Endothelial cell of umbilical vein (primary cell): ENCODE measurements at regions of chr17 and their contacts with region 1.

Region 1: GRCh38 chr17:70552230-70552981 is 383.1 kb downstream of the KCNJ2 start:
- DNase-seq: peak; percentile 75
- H3K4me3 ChIP-seq: no peak overlapping the region
- H3K27ac ChIP-seq: no peak overlapping the region
- H3K4me1 ChIP-seq: no peaks in the 10 kb centered on the region
- H3K27me3 ChIP-seq: no peaks in the 10 kb centered on the region
- CTCF ChIP-seq: peak; percentile 12 to 24
- POLR2A ChIP-seq: no peak

Region 2: GRCh38 chr17:69414408-69415274 is 1137.8 kb before region 1 on chr17 and contains the start of gene MAP2K6:
- CTCF ChIA-PET with region 1: no interaction called
- POLR2A ChIA-PET with region 1: no interaction called
- dilution Hi-C with region 1: no loop called
- intact Hi-C with region 1: loop called (anchors 10 kb)
- DNase-seq: peak; percentile 86
- H3K4me3 ChIP-seq: peak within 1 kb of the TSS; percentile 42 to 70 (median 48)
- H3K27ac ChIP-seq: peak within 1 kb of the TSS; percentile 35
- H3K4me1 ChIP-seq: peaks cover 48% of the 10 kb centered on the region
- H3K27me3 ChIP-seq: no peaks in the 10 kb centered on the region
- CTCF ChIP-seq: no peak
- POLR2A ChIP-seq: peak; percentile 50
- total RNA-seq, gene MAP2K6: 11.4 and 13.9 TPM in 2 replicates

Region 3: GRCh38 chr17:69539781-69540319 is 1012.6 kb before region 1 on chr17:
- CTCF ChIA-PET with region 1: interaction called, 15 read pairs
- POLR2A ChIA-PET with region 1: no interaction called
- dilution Hi-C with region 1: no loop called
- intact Hi-C with region 1: no loop called
- DNase-seq: peak; percentile 97
- H3K4me3 ChIP-seq: no peak overlapping the region
- H3K27ac ChIP-seq: peak overlapping the region; percentile 89
- H3K4me1 ChIP-seq: peaks cover 18% of the 10 kb centered on the region
- H3K27me3 ChIP-seq: no peaks in the 10 kb centered on the region
- CTCF ChIP-seq: no peak
- POLR2A ChIP-seq: peak; percentile 34

Region 4: GRCh38 chr17:69567130-69567529 is 985.3 kb before region 1 on chr17:
- CTCF ChIA-PET with region 1: interaction called, 65 read pairs
- POLR2A ChIA-PET with region 1: no interaction called
- dilution Hi-C with region 1: no loop called
- intact Hi-C with region 1: loop called (anchors 1 kb)
- DNase-seq: no peak
- H3K4me3 ChIP-seq: no peak overlapping the region
- H3K27ac ChIP-seq: no peak overlapping the region
- H3K4me1 ChIP-seq: no peaks in the 10 kb centered on the region
- H3K27me3 ChIP-seq: peaks cover 0 to 4% of the 10 kb centered on the region in 2 experiments
- CTCF ChIP-seq: no peak
- POLR2A ChIP-seq: no peak

Region 5: DNA sequence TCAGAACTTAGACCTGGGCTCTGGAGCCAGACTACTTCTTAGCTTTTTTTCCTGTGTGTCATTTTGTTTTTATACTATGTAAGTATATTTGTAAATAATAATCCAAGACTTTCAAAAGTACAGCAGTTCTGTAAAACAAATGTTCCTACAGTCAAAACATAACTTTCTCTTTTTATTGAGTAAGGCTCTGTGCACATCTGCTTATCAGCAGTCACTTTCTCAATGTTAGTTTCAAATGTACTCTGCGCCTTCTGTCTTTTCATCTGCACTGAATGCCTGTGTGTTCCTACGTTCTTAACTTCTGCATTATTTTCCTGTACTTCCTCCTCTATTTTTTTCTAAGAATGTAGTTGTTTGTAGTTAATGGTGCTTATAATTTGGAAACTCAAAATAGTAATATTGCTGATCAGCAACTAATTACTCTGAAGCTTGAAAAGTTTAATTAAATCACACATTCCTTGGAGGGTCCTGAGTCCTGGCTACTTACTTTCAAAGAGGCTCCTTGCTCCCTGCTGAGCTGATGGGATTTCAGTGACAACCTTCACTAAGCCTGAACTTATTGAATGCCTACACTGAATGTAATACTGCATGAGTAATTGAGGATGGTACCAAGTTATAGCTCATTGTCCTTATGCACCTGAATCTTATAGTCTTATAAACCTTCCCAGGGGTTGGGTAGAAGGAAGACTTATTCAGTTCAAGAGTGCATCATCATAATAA is 53.2 kb before region 1 on chr17:
- CTCF ChIA-PET with region 1: no interaction called
- POLR2A ChIA-PET with region 1: no interaction called
- dilution Hi-C with region 1: no loop called
- intact Hi-C with region 1: no loop called
- DNase-seq: no peak
- H3K4me3 ChIP-seq: no peak overlapping the region
- H3K27ac ChIP-seq: no peak overlapping the region
- H3K4me1 ChIP-seq: no peaks in the 10 kb centered on the region
- H3K27me3 ChIP-seq: no peaks in the 10 kb centered on the region
- CTCF ChIP-seq: no peak
- POLR2A ChIP-seq: no peak

Region 6: DNA sequence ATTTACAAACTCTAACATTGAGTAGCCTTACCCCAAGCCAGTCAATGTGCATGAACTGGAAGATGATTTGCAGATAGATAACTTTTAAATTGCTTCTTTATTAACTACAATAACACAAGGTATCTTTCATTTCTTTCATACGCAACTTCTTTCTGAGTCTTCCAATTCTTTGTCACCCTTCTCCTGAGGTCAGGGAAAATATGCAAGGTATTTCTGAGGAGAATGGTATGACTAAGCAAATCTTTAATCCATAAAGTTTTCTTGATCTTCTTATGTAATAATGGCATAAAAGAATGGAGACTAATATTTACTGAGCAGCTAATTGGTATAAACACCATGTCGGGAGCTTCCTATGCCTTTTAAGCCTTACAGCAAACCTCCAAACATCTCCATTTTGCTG is 55.8 kb after region 1 on chr17:
- CTCF ChIA-PET with region 1: no interaction called
- POLR2A ChIA-PET with region 1: no interaction called
- dilution Hi-C with region 1: no loop called
- intact Hi-C with region 1: no loop called
- DNase-seq: peak; percentile 12
- H3K4me3 ChIP-seq: no peak overlapping the region
- H3K27ac ChIP-seq: no peak overlapping the region
- H3K4me1 ChIP-seq: no peaks in the 10 kb centered on the region
- H3K27me3 ChIP-seq: no peaks in the 10 kb centered on the region
- CTCF ChIP-seq: no peak
- POLR2A ChIP-seq: no peak